ENCODE measurements at regions of chr10 and their contacts with region 1.

Region 1: DNA sequence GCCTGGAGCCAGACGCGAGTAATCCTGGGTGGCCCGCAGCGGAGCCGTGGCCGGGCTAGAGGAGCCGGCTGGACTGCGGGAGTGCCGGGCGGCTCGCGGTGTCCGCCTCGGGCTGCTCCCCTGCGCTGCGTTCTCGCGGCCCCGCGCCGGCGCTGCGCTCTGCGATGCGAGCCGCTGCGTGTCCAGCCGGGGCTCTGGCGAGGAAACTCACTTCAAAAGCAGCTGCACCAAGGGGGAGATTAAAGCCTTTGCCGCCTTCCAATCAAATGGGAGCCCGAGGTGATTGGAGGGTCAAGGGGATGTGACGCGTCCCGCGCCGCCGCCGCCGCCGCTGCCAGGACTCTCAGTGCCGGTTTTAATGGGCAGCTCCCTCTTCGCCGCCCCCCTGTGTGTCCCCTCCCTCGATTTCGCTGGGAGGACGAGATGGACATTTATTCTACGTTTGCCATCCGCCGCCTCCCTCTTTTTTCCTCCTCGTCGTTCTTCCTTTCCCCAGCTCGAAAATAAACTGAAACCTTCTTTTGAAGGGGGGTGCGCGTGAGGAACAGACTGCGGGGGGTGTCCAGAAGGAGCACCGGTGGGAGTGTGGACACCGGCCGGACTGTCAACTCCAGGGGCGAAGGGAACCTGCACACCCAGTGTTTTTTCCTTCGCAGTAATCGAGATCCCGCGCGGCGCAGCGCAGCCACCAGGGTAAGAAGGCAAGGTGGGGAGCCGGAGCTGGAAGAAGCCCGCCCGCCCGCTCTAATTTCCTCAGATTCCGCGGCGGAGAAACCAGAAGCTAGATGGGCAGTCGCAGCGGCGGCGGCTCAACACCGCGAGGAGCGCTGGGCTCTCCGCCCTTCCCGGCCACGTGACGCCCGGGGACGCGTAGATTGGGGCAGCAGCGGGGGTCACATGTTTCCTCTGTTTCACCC is at the start of gene ZNF503:
- DNase-seq: peak; percentile 97 to 99 (median 98)
- ATAC-seq: peak; percentile 83 to 92 (median 88)
- H3K4me3 ChIP-seq: peak within 1 kb of the TSS; percentile 74 to 98 (median 92)
- H3K27ac ChIP-seq: peak within 1 kb of the TSS; percentile 81 to 100 (median 97)
- H3K4me1 ChIP-seq: peaks cover 0 to 53% (median 20%) of the 10 kb centered on the region in 12 donors
- H3K27me3 ChIP-seq: peaks cover 0 to 38% (median 0%) of the 10 kb centered on the region in 9 donors
- CTCF ChIP-seq: peak in 7 of 12 donors; percentile 10 to 40 (median 32)
- POLR2A ChIP-seq: peak; percentile 63 to 99
- total RNA-seq, gene ZNF503: 3.4 to 8.6 (median 7.4) TPM

Region 2: GRCh38 chr10:74589226-74589673 is 812.6 kb before region 1 on chr10:
- intact Hi-C with region 1: no loop called
- DNase-seq: peak; percentile 85 to 95 (median 94)
- ATAC-seq: peak; percentile 89 to 96 (median 94)
- H3K4me3 ChIP-seq: no peak overlapping the region
- H3K27ac ChIP-seq: peak overlapping the region; percentile 38 to 78 (median 64)
- H3K4me1 ChIP-seq: peaks cover 8 to 83% (median 56%) of the 10 kb centered on the region in 12 donors
- H3K27me3 ChIP-seq: no peaks in the 10 kb centered on the region
- CTCF ChIP-seq: no peak
- POLR2A ChIP-seq: no peak

Region 3: GRCh38 chr10:75238182-75239095 is 163.4 kb before region 1 on chr10:
- intact Hi-C with region 1: no loop called
- DNase-seq: no peak
- ATAC-seq: no peak
- H3K4me3 ChIP-seq: no peak overlapping the region
- H3K27ac ChIP-seq: no peak overlapping the region
- H3K4me1 ChIP-seq: peaks cover 0 to 26% (median 14%) of the 10 kb centered on the region in 12 donors
- H3K27me3 ChIP-seq: no peaks in the 10 kb centered on the region
- CTCF ChIP-seq: no peak
- POLR2A ChIP-seq: no peak

Region 4: DNA sequence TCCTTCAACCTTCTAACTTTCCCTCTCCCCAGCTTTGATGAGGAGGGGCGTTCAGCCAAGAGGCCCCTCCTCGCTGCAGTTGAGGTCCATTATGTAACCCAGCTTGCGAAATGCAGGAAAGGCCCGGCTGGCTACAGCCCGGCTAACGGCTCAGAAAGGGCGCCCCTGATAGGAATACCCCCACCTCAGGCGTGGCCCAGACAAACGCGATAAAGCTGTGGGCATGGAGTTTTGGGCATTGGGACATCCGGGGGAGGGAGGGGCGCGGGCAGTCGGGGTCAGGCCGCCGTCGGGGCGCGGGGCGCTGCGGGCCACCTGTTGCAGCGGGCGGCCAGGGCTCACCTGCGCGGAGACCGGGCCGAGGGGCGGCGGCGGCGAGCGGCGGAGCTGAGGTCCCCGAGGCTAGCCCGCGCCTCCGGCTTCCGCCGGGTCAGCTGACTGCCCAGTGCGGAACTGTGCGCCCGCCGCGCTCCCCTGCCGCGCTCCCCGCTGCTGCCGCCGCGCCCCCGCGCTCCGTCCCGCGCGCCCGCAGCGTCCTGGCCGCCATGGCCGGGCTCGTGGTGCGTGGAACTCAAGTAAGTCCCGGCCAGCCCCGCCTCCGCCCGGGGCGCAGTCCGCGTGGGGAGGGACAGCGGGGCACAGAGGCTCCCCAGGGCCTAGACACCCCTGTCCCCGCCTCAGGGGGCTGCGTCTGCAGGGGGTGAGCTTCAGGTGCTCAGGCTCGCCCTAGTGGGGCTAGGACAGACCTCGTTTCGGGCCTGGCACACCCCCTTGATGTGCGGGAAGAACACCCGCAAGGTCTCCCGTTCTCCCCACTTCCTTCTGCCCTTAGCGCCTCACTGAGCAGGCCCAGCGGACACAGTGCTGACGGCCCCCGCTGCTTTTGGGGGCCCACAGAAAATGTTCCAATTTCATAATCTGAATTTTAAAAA is 29.6 kb after region 1 on chr10 and contains the start of gene LRMDA:
- intact Hi-C with region 1: loop called in 1 of 10 experiments (anchors 2 kb)
- DNase-seq: peak; percentile 46 to 81 (median 63)
- ATAC-seq: peak in 3 of 4 donors; percentile 58 to 82 (median 78)
- H3K4me3 ChIP-seq: peak within 1 kb of the TSS; percentile 54 to 84 (median 70)
- H3K27ac ChIP-seq: peak within 1 kb of the TSS; percentile 49 to 92 (median 78)
- H3K4me1 ChIP-seq: peaks cover 0 to 59% (median 35%) of the 10 kb centered on the region in 12 donors
- H3K27me3 ChIP-seq: no peaks in the 10 kb centered on the region
- CTCF ChIP-seq: no peak
- POLR2A ChIP-seq: no peak
- total RNA-seq, gene LRMDA: 7.7 to 34.4 (median 14.9) TPM

Region 5: DNA sequence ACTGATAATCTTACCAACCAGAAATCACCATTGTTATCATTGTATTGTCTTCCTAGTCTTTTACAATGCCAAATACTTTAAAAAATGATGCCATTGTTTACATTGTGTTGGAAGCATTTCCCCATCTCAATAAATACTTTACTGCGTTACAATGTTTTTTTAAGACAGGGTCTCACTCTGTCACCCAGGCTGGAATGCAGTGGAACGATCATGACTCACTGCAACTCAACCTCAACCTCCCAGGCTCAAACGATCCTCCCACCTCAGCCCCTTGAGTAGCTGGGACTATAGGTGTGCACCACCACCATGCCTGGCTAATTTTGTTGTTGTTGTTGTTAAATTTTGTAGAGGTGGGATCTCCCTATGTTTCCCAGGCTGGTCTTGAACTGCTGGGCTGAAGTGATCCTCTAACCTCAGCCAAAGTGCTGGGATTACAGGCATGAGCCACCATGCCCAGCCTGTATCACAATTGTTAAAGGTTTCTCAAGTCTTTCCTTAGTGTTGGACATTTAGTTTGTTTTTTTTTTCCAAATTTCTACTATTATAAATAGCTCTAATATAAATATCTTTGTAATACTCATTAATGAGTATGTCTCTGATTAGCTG is 43.1 kb after region 1 on chr10:
- intact Hi-C with region 1: no loop called
- DNase-seq: no peak
- ATAC-seq: no peak
- H3K4me3 ChIP-seq: no peak overlapping the region
- H3K27ac ChIP-seq: no peak overlapping the region
- H3K4me1 ChIP-seq: peaks cover 0 to 20% (median 13%) of the 10 kb centered on the region in 12 donors
- H3K27me3 ChIP-seq: no peaks in the 10 kb centered on the region
- CTCF ChIP-seq: no peak
- POLR2A ChIP-seq: no peak

Region 6: DNA sequence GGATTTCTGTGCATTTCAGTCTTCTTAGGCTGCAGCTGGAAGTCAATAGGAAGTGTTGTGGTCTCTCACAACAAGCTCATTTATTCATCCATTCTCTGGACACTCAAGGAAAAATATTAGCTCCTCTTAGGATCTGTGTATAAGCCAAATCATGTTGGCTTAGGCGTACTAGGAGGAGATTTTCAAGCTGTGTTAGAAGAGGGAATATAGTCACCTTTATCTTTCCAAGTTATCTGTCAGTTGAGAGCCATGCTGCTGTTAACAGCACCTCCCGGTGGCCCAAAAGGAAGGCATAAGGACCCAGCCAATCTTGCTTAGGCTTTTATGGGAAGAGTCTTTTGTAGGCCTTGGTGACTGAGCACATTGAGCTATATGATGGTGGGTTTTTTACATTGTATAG is 249.6 kb after region 1 on chr10:
- intact Hi-C with region 1: loop called in 4 of 10 experiments (anchors 2 to 10 kb)
- DNase-seq: no peak
- ATAC-seq: no peak
- H3K4me3 ChIP-seq: no peak overlapping the region
- H3K27ac ChIP-seq: no peak overlapping the region
- H3K4me1 ChIP-seq: peaks cover 0 to 50% (median 26%) of the 10 kb centered on the region in 12 donors
- H3K27me3 ChIP-seq: no peaks in the 10 kb centered on the region
- CTCF ChIP-seq: peak in 2 of 12 donors; percentile 22 to 23
- POLR2A ChIP-seq: no peak

Region 7: GRCh38 chr10:75910032-75910431 is 508.2 kb after region 1 on chr10:
- intact Hi-C with region 1: loop called (anchors 2 to 10 kb)
- DNase-seq: no peak
- ATAC-seq: no peak
- H3K4me3 ChIP-seq: no peak overlapping the region
- H3K27ac ChIP-seq: no peak overlapping the region
- H3K4me1 ChIP-seq: no peaks in the 10 kb centered on the region
- H3K27me3 ChIP-seq: no peaks in the 10 kb centered on the region
- CTCF ChIP-seq: peak; percentile 37 to 67 (median 54)
- POLR2A ChIP-seq: no peak

Region 8: DNA sequence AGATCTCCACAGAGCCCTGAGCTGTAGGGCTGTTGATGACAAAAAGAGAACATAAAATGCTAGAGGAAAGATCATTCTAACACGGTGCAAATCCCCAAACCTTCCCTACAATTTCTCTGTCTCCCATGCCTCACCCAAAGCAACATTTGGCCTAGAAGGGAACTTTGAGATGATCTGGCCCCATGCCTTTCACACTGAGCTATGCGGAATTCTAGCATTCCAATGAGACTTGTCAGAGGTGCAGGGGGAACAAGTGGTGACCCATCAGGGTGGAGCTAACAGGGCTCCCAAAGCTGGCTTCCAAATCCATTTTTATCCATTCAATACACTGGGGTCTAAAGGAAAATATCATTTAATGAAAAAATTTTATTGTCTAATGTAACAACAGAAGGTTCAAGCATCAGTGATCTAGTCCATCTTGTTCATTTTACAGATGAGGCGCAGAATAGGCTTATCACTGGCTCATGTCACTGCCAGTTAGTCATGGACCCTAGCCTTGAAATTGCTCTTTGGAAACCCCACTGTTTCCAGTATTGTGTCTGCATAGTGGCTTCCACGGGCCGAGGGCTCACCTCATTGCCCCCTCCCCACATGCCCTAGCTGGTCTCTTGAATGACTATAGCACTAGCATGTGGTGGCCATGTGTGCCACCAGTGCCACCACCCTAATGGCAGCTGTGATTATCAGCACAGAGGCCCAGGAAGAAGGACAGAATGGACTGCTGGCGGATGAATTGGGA is 1030.6 kb after region 1 on chr10:
- intact Hi-C with region 1: loop called in 3 of 10 experiments (anchors 10 kb)
- DNase-seq: peak in 4 of 5 donors; percentile 26 to 63 (median 48)
- ATAC-seq: peak; percentile 22 to 49 (median 38)
- H3K4me3 ChIP-seq: no peak overlapping the region
- H3K27ac ChIP-seq: peak overlapping the region; percentile 68 to 91 (median 80)
- H3K4me1 ChIP-seq: peaks cover 0 to 82% (median 62%) of the 10 kb centered on the region in 12 donors
- H3K27me3 ChIP-seq: no peaks in the 10 kb centered on the region
- CTCF ChIP-seq: no peak
- POLR2A ChIP-seq: no peak

Region 9: DNA sequence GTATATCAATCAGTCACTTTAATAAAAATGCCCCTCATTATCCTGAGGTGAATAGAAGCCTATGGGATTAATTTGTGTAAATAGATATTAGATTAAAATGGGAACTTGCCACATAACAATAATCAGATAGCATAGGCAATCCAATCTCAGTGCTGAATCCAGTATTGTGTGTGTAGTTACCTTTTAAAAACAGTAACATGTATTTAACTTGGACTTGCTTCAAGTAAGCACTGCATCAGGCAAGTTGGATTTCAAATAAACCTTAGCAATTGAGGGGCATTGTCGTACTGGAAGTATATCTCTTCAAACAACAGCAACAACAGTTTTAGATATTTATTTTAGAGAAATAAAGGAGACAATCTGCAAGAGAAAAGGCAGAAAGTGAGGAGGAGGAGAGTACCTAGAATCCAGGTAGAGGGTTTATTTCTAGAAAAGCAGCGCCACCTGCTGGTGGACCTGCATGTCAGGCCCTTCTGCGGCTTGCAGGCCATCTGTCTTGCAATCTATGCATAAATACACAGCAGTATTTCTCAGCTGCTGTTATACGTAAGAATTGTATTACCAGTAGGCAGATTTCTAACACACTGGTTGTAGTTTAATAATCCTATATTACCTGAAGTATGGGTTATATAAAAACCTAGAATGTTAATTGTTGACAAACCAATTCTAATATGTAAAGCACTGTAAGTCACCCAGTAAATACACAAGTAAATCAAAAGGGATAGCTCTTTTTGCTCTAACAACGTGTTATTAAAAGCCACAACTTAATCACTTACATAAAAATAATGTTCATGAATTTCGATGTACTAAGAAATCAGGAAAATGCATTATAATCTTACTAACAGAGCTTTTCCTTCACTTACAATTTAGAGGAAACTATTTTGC is 1583.0 kb after region 1 on chr10:
- intact Hi-C with region 1: loop called in 4 of 10 experiments (anchors 5 to 10 kb)
- DNase-seq: peak; percentile 57 to 76 (median 65)
- ATAC-seq: peak in 3 of 4 donors; percentile 72 to 89 (median 80)
- H3K4me3 ChIP-seq: no peak overlapping the region
- H3K27ac ChIP-seq: no peak overlapping the region
- H3K4me1 ChIP-seq: no peaks in the 10 kb centered on the region
- H3K27me3 ChIP-seq: no peaks in the 10 kb centered on the region
- CTCF ChIP-seq: peak; percentile 80 to 97 (median 92)
- POLR2A ChIP-seq: no peak